ENCODE measurements at regions of chr17 and their contacts with region 1.

Region 1: GRCh38 chr17:48878918-48879898 is 13.4 kb upstream of the ATP5MC1 start:
- DNase-seq: no peak
- H3K4me3 ChIP-seq: no peak overlapping the region
- H3K27ac ChIP-seq: no peak overlapping the region
- H3K4me1 ChIP-seq: peaks cover 24% of the 10 kb centered on the region
- H3K27me3 ChIP-seq: no peaks in the 10 kb centered on the region
- CTCF ChIP-seq: peak; percentile 95

Region 2: DNA sequence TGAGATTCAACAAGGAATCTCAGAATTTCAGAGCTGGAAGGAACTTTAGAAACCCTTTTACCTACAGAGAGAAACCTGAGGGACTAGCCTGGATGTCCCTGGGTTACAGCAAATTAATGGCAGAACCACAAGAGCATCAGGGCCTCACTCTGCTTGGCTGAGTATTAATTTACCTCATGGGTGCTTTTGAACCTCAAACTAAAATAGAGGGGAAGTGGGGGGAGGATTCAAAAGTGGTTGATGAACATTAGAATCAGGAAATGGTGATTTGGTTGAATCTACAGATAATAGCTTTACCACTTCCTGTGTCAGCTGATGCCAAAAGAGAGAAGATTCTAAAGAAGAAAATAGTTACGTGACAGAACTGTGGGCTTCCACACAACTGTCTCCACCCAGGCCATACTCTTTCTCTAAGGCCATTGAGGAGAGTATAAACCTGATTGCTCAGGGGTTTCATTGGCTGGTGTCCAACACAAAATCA is 437.9 kb before region 1 on chr17:
- intact Hi-C with region 1: no loop called
- DNase-seq: no peak
- H3K4me3 ChIP-seq: no peak overlapping the region
- H3K27ac ChIP-seq: no peak overlapping the region
- H3K4me1 ChIP-seq: no peaks in the 10 kb centered on the region
- H3K27me3 ChIP-seq: peaks cover 68% of the 10 kb centered on the region
- CTCF ChIP-seq: no peak

Region 3: GRCh38 chr17:48678141-48678971 is 200.9 kb before region 1 on chr17:
- intact Hi-C with region 1: loop called (anchors 10 kb)
- DNase-seq: peak; percentile 53
- H3K4me3 ChIP-seq: no peak overlapping the region
- H3K27ac ChIP-seq: no peak overlapping the region
- H3K4me1 ChIP-seq: peaks cover 5% of the 10 kb centered on the region
- H3K27me3 ChIP-seq: peaks cover 100% of the 10 kb centered on the region
- CTCF ChIP-seq: peak; percentile 93

Region 4: GRCh38 chr17:48814504-48814903 is 64.7 kb before region 1 on chr17:
- intact Hi-C with region 1: loop called (anchors 2 kb)
- DNase-seq: peak; percentile 35
- H3K4me3 ChIP-seq: no peak overlapping the region
- H3K27ac ChIP-seq: no peak overlapping the region
- H3K4me1 ChIP-seq: peaks cover 18% of the 10 kb centered on the region
- H3K27me3 ChIP-seq: peaks cover 12% of the 10 kb centered on the region
- CTCF ChIP-seq: peak; percentile 85

Region 5: DNA sequence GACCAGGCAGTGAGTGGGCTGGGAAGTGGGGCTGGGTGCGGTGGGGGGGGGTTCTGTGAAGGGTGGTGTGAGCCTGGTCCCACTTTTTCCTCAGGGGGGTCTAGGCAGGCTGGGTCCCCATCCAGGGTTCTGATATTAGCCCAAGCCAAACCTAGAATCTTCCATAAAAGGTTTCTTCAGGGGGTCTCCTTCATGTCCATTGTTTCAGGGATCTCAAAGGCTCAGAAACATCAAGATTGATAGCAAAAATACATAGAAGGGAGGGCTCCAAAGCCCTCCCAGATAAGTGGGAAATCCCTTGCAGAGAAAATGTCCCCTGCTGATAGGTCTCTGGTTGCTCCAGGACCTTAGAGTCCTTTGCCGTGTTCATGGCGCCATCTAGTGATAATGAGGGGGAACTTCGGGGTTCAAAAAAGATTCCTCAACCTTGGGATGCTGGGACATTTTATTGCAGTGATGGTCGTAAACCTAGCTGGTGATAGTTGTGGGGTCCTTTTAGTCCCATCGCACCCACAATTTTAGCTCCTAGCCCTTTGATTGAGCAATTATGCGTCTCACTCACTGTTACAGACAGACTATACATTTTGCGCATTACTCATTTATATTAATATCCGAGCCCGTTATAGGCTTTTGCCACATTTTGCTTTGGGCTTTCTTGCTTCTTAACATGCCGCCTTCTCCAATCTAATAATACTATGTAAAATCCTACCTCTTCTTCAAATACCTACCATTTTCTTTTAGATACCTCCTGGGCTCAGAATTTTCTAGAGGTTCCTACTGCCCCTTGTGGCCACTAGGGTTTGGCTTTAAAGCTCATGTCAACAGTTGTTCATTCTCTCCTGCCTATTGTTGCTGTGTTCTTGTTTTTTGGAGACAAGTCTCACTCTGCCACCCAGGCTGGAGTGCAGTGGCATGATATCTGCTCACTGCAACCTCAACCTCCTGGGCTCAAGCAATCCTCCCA is 153.0 kb after region 1 on chr17:
- intact Hi-C with region 1: loop called (anchors 10 kb)
- DNase-seq: no peak
- H3K4me3 ChIP-seq: no peak overlapping the region
- H3K27ac ChIP-seq: no peak overlapping the region
- H3K4me1 ChIP-seq: no peaks in the 10 kb centered on the region
- H3K27me3 ChIP-seq: peaks cover 71% of the 10 kb centered on the region
- CTCF ChIP-seq: peak; percentile 79

Measured in left ventricle myocardium inferior (tissue), 1 donor.